Naive thymus-derived CD4-positive, alpha-beta T cell (primary cell): ENCODE measurements at regions of chr16 and their contacts with region 1.

Region 1: DNA sequence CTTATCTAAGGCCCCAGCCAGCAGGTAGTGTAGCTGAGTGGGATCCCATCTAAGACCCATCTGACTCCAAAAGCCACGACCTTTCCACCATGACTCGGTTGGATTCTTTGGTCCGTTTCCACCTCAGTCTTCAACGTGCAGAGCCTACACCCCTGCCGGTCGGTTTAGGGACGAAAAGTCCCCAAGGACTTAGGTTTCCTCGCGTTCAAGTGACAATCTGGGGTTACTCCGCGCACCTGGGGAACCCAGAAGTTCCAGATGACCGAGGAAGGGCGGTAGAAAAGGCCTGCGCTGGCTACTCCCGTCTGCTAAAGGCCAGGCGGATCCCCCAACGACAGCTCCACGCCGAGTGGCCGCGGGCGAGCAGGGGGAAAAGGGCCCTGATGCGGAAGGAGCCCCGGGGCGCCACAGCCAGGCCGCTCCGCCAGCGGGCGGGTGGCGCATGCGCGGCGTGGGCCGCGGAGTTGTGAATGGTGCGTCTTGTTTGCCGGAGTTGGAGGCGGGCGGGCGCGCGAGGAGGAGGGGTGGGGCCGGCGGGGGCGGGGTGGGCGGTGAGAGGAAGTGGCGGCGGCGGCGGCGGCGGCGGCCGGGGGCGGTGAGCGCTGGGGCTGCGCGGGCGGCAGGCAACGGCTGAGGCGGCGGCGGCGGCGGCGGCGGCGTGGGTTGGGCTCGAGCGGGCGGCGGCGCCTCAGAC is at the start of gene CBFB:
- DNase-seq: peak; percentile 92 to 97 (median 96)
- ATAC-seq: peak; percentile 92
- H3K4me3 ChIP-seq: peak within 1 kb of the TSS; percentile 78
- H3K4me3 Mint-ChIP-seq: peak within 1 kb of the TSS; percentile 86 to 93 (median 90)
- H3K27ac ChIP-seq: peak within 1 kb of the TSS; percentile 99
- H3K27ac Mint-ChIP-seq: peak within 1 kb of the TSS; percentile 90 to 97 (median 95)
- H3K4me1 ChIP-seq: peaks cover 16 to 23% of the 10 kb centered on the region in 2 donors
- H3K4me1 Mint-ChIP-seq: peaks cover 17 to 53% (median 46%) of the 10 kb centered on the region in 7 donors
- H3K27me3 ChIP-seq: no peaks in the 10 kb centered on the region
- H3K27me3 Mint-ChIP-seq: no peaks in the 10 kb centered on the region
- total RNA-seq, gene CBFB: 75.4 to 223 (median 94.4) TPM

Region 2: DNA sequence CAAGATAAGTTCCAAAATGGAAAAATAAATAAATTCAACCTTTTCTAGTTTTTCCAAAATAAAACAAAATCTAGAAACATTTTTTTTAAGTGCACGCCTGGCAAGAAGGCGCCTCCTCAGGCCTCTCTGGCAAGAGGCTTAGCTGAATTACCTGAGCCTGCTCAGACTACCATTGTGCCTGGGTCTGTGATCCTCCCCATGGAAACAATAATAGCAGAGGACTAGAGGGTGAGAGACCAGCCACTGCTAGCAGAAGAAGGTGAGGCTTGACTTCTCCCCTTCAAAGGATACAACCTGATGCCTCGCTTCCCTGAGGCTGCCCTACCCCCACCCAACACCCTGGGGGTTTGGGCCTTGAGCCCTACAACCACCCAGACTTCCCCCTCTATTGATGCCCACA is 242.2 kb before region 1 on chr16:
- CTCF ChIA-PET with region 1: no interaction called
- POLR2A ChIA-PET with region 1: no interaction called
- intact Hi-C with region 1: no loop called
- DNase-seq: no peak
- ATAC-seq: no peak
- H3K4me3 ChIP-seq: no peak overlapping the region
- H3K4me3 Mint-ChIP-seq: no peak overlapping the region
- H3K27ac ChIP-seq: no peak overlapping the region
- H3K27ac Mint-ChIP-seq: no peak overlapping the region
- H3K4me1 ChIP-seq: no peaks in the 10 kb centered on the region
- H3K4me1 Mint-ChIP-seq: no peaks in the 10 kb centered on the region
- H3K27me3 ChIP-seq: no peaks in the 10 kb centered on the region
- H3K27me3 Mint-ChIP-seq: peaks cover 0 to 9% (median 0%) of the 10 kb centered on the region in 5 donors

Region 3: GRCh38 chr16:66947302-66948065 is 81.2 kb before region 1 on chr16:
- CTCF ChIA-PET with region 1: interaction called, 3 read pairs
- POLR2A ChIA-PET with region 1: no interaction called
- intact Hi-C with region 1: loop called in 1 of 2 experiments (anchors 5 kb)
- DNase-seq: peak; percentile 64 to 86 (median 80)
- ATAC-seq: peak; percentile 97
- H3K4me3 ChIP-seq: peak overlapping the region; percentile 45
- H3K4me3 Mint-ChIP-seq: peak overlapping the region; percentile 83 to 95 (median 92)
- H3K27ac ChIP-seq: peak overlapping the region; percentile 26
- H3K27ac Mint-ChIP-seq: peak overlapping the region in 3 of 9 donors; percentile 13 to 50 (median 29)
- H3K4me1 ChIP-seq: peaks cover 0 to 4% of the 10 kb centered on the region in 2 donors
- H3K4me1 Mint-ChIP-seq: peaks cover 13 to 24% (median 18%) of the 10 kb centered on the region in 7 donors
- H3K27me3 ChIP-seq: no peaks in the 10 kb centered on the region
- H3K27me3 Mint-ChIP-seq: peaks cover 23 to 39% (median 32%) of the 10 kb centered on the region in 5 donors

Region 4: GRCh38 chr16:67017810-67018488 is 10.8 kb before region 1 on chr16:
- CTCF ChIA-PET with region 1: interaction called, 19 read pairs
- POLR2A ChIA-PET with region 1: interaction called, 31 read pairs
- intact Hi-C with region 1: loop called (anchors 1 kb)
- DNase-seq: peak; percentile 58 to 87 (median 84)
- ATAC-seq: peak; percentile 96
- H3K4me3 ChIP-seq: no peak overlapping the region
- H3K4me3 Mint-ChIP-seq: peak overlapping the region in 2 of 10 donors; percentile 16 to 21
- H3K27ac ChIP-seq: no peak overlapping the region
- H3K27ac Mint-ChIP-seq: peak overlapping the region in 2 of 9 donors; percentile 43 to 75
- H3K4me1 ChIP-seq: peaks cover 4 to 11% of the 10 kb centered on the region in 2 donors
- H3K4me1 Mint-ChIP-seq: peaks cover 0 to 55% (median 8%) of the 10 kb centered on the region in 7 donors
- H3K27me3 ChIP-seq: no peaks in the 10 kb centered on the region
- H3K27me3 Mint-ChIP-seq: no peaks in the 10 kb centered on the region

Region 5: GRCh38 chr16:67053767-67054334 is 25.1 kb after region 1 on chr16:
- CTCF ChIA-PET with region 1: interaction called, 3 read pairs
- POLR2A ChIA-PET with region 1: interaction called, 20 read pairs
- intact Hi-C with region 1: loop called (anchors 1 to 2 kb)
- DNase-seq: peak in 6 of 9 donors; percentile 10 to 46 (median 23)
- ATAC-seq: peak; percentile 46
- H3K4me3 ChIP-seq: peak overlapping the region; percentile 47
- H3K4me3 Mint-ChIP-seq: peak overlapping the region; percentile 34 to 91 (median 76)
- H3K27ac ChIP-seq: peak overlapping the region; percentile 45
- H3K27ac Mint-ChIP-seq: peak overlapping the region; percentile 63 to 93 (median 89)
- H3K4me1 ChIP-seq: peaks cover 19 to 20% of the 10 kb centered on the region in 2 donors
- H3K4me1 Mint-ChIP-seq: peaks cover 36 to 60% (median 44%) of the 10 kb centered on the region in 7 donors
- H3K27me3 ChIP-seq: no peaks in the 10 kb centered on the region
- H3K27me3 Mint-ChIP-seq: no peaks in the 10 kb centered on the region

Region 6: DNA sequence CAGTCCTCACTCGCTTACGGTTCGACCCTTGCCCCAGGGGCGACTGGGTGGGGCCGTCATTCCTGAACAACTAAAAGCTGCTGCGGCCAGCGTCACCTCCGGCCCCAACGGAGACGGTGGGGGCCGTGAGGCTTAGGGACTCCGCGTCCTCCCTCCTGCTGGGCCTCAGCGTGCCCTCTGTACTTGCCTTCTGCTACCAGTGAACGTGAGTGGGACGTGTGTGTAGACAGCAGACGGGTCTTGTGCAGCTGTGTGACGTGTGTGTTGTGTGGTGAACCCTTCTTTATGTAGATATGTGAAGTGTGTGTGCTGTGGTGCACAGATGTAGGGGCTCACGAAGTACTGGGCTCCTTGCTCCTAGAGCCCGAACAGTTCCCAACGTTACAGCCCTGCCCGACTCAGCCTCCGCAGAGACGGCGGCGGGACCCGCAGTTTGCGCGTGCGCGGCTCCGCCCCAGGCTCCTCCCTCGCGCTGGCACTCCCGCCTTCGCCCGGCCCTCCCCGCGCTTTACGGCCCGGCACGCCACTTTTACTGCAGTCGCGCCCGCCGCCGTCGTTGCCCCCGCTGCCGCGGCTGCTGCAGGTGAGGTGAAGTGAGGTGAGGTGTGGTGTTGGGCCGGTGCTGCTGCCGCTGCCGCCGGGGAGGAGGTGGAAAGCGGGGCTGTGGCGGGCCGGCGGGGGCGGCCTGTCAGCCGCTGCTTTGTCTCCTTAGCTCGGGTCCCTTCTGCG is 80.9 kb after region 1 on chr16 and contains the start of gene PHAF1:
- CTCF ChIA-PET with region 1: no interaction called
- POLR2A ChIA-PET with region 1: interaction called, 3 read pairs
- intact Hi-C with region 1: loop called in 1 of 2 experiments (anchors 1 kb)
- DNase-seq: peak; percentile 93 to 99 (median 97)
- ATAC-seq: peak; percentile 95
- H3K4me3 ChIP-seq: peak within 1 kb of the TSS; percentile 91
- H3K4me3 Mint-ChIP-seq: peak within 1 kb of the TSS; percentile 91 to 96 (median 94)
- H3K27ac ChIP-seq: peak within 1 kb of the TSS; percentile 78
- H3K27ac Mint-ChIP-seq: peak within 1 kb of the TSS; percentile 81 to 95 (median 87)
- H3K4me1 ChIP-seq: peaks cover 9 to 11% of the 10 kb centered on the region in 2 donors
- H3K4me1 Mint-ChIP-seq: peaks cover 19 to 43% (median 31%) of the 10 kb centered on the region in 7 donors
- H3K27me3 ChIP-seq: no peaks in the 10 kb centered on the region
- H3K27me3 Mint-ChIP-seq: no peaks in the 10 kb centered on the region
- total RNA-seq, gene PHAF1: 17.8 to 29.6 (median 21.2) TPM

Region 7: GRCh38 chr16:67183627-67184328 is 155.1 kb after region 1 on chr16 and contains the start of gene MATCAP1:
- CTCF ChIA-PET with region 1: no interaction called
- POLR2A ChIA-PET with region 1: no interaction called
- intact Hi-C with region 1: loop called in 1 of 2 experiments (anchors 1 kb)
- DNase-seq: peak; percentile 90 to 98 (median 96)
- ATAC-seq: peak; percentile 97
- H3K4me3 ChIP-seq: peak within 1 kb of the TSS; percentile 79
- H3K4me3 Mint-ChIP-seq: peak within 1 kb of the TSS in 5 of 10 donors; percentile 48 to 91 (median 86)
- H3K27ac ChIP-seq: peak within 1 kb of the TSS; percentile 97
- H3K27ac Mint-ChIP-seq: peak within 1 kb of the TSS in 2 of 9 donors; percentile 58 to 67
- H3K4me1 ChIP-seq: peaks cover 12 to 15% of the 10 kb centered on the region in 2 donors
- H3K4me1 Mint-ChIP-seq: peaks cover 8 to 24% (median 13%) of the 10 kb centered on the region in 7 donors
- H3K27me3 ChIP-seq: no peaks in the 10 kb centered on the region
- H3K27me3 Mint-ChIP-seq: peaks cover 4 to 15% (median 4%) of the 10 kb centered on the region in 5 donors
- total RNA-seq, gene MATCAP1: 4.3 to 88.1 (median 11.0) TPM

Region 8: DNA sequence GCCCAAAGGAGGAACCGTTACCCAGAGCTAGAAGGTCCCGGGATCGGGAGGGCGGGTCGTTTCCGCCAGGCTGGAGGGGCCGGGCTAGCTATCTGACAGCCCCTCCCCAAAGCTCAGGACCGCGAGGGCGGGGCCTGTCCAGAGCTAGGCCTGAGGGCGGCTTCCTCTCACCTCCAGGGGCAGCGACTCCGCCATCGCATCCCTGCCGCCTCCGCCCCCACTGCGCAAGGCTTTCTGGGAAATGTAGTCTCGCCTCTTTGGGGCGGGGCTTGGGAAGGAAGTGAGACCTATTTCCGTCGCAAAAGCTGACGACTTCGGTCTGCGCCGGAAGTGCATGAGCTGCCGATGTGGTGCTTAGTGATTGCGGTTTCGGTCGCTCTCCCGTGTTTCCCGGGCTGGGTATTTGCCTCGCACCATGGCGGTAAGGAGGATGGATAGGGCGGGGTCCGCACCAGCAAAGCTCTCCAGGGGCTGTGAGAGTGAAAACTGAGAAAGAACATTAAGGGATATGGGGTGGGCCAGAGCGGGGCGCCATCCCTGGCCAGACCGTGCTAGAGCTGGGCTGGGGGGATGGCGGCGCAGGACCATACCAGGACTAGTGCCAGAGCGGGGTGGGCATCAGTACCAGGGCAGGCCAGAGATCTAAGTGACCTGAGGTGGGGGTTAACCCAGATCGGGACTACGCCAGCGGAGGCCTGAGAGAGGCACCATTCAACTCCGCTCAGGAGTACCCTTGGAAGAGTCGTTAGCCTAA is 198.3 kb after region 1 on chr16 and contains the start of gene TMEM208:
- CTCF ChIA-PET with region 1: no interaction called
- POLR2A ChIA-PET with region 1: interaction called, 3 read pairs
- intact Hi-C with region 1: loop called in 1 of 2 experiments (anchors 2 kb)
- DNase-seq: peak; percentile 94 to 99 (median 97)
- ATAC-seq: peak; percentile 99
- H3K4me3 ChIP-seq: peak within 1 kb of the TSS; percentile 90
- H3K4me3 Mint-ChIP-seq: peak within 1 kb of the TSS; percentile 94 to 100 (median 98)
- H3K27ac ChIP-seq: peak within 1 kb of the TSS; percentile 85
- H3K27ac Mint-ChIP-seq: peak within 1 kb of the TSS; percentile 93 to 100 (median 99)
- H3K4me1 ChIP-seq: peaks cover 14 to 38% of the 10 kb centered on the region in 2 donors
- H3K4me1 Mint-ChIP-seq: peaks cover 37 to 62% (median 50%) of the 10 kb centered on the region in 7 donors
- H3K27me3 ChIP-seq: no peaks in the 10 kb centered on the region
- H3K27me3 Mint-ChIP-seq: no peaks in the 10 kb centered on the region
- total RNA-seq, gene TMEM208: 27.6 to 44.8 (median 32.7) TPM